PC-9 (cell line): ENCODE measurements at regions of chr12 and their contacts with region 1.

Region 1: GRCh38 chr12:105616971-105617540 is 286.6 kb downstream of the C12orf75 start:
- DNase-seq: no peak
- H3K4me3 ChIP-seq: no peak overlapping the region
- H3K27ac ChIP-seq: no peak overlapping the region
- H3K4me1 ChIP-seq: no peaks in the 10 kb centered on the region
- H3K27me3 ChIP-seq: no peaks in the 10 kb centered on the region
- CTCF ChIP-seq: no peak

Region 2: GRCh38 chr12:107328442-107329133 is 1711.5 kb after region 1 on chr12:
- CTCF ChIA-PET with region 1: interaction called, 14 read pairs
- POLR2A ChIA-PET with region 1: no interaction called
- intact Hi-C with region 1: no loop called
- DNase-seq: peak; percentile 39 to 42
- H3K4me3 ChIP-seq: no peak overlapping the region
- H3K27ac ChIP-seq: no peak overlapping the region
- H3K4me1 ChIP-seq: peaks cover 43% of the 10 kb centered on the region
- H3K27me3 ChIP-seq: no peaks in the 10 kb centered on the region
- CTCF ChIP-seq: no peak